Ovary (tissue), 10 donors: ENCODE measurements at regions of chr2 and their contacts with region 1.

Region 1: GRCh38 chr2:173027181-173028128 is 48.2 kb upstream of the MAP3K20 start:
- DNase-seq: peak; percentile 78 to 95 (median 85)
- H3K4me3 ChIP-seq: no peak overlapping the region
- H3K27ac ChIP-seq: peak overlapping the region in 1 of 2 donors; percentile 77
- H3K4me1 ChIP-seq: peaks cover 9% of the 10 kb centered on the region
- H3K27me3 ChIP-seq: no peaks in the 10 kb centered on the region
- CTCF ChIP-seq: peak; percentile 94 to 98 (median 96)
- EP300 ChIP-seq: no peak
- POLR2A ChIP-seq: no peak

Region 2: DNA sequence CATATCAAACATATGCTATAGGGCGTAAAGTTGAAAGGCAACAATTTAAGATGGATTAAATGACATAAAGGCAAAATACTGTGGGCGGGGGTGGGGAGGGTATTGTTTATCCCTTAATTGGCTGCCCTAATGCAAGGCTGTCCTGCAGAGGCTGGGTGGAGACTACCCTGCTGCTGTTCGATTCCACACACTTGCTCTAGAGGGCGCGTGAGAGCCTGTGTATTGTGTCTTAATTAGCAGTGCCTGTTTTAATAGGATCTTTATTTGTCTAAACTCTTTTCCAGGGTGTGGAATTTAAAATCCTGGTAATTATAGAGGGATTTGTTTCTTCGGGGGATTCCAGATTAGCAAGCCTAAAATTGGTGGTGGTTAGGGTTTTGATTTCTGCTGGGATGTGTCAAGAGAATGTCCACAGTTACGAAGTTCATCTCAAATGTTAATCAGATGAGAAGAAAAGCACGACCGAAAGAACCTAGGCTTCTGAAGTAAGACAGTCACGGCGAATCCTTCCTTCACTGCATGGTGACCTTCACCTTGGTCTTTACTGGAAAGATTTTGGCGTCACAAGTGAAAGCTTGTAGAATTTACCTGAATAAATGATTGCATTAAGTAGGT is 55.3 kb before region 1 on chr2:
- intact Hi-C with region 1: loop called in 2 of 4 experiments (anchors 10 kb)
- DNase-seq: peak in 3 of 5 donors; percentile 28 to 49 (median 35)
- H3K4me3 ChIP-seq: no peak overlapping the region
- H3K27ac ChIP-seq: no peak overlapping the region
- H3K4me1 ChIP-seq: peaks cover 16% of the 10 kb centered on the region
- H3K27me3 ChIP-seq: no peaks in the 10 kb centered on the region
- CTCF ChIP-seq: no peak
- EP300 ChIP-seq: no peak
- POLR2A ChIP-seq: no peak

Region 3: GRCh38 chr2:173090276-173090877 is 62.9 kb after region 1 on chr2:
- intact Hi-C with region 1: no loop called
- DNase-seq: peak in 2 of 5 donors; percentile 24 to 29
- H3K4me3 ChIP-seq: no peak overlapping the region
- H3K27ac ChIP-seq: peak overlapping the region; percentile 6 to 63
- H3K4me1 ChIP-seq: peaks cover 11% of the 10 kb centered on the region
- H3K27me3 ChIP-seq: no peaks in the 10 kb centered on the region
- CTCF ChIP-seq: no peak
- EP300 ChIP-seq: no peak
- POLR2A ChIP-seq: no peak

Region 4: DNA sequence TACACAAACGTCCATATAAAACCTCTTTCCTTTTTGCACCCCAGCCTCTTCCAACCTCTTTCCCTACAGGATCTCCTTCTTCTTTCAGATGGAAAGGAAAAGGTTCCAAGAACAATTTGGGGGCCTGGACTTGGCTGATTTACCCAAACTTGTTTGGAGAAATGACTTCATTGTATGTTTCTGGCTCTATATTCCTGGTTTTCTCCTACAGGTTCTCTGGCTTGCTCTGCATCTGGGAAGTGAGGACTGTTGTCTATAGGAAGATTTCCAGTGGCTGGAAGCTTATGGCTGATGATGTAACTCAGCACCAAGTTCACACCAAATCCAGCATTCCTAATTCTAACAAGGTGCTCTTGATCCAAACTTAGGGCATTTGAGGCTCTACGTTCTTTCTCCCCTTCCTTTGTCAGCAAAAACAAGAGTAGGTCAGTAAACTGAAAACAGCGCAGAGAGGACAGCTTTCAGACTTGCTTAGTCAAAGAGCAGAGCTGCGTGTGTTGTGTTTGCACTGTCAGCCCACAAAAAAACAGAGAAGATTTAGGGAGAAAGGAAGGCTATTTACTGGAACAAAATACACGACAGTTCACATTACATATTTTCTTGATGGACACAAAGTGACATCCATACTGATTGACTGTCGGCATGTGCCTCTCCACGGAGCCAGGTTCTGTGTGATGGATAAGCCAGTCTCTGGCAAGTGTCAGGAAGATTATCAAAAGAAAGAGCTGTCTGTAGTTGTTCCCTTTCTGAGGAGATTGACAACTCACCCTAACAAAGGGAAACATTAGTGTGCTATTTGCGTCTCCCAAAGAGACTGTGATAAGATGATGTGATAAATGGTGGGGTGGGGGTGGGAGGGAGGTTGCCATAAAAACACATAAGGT is 366.9 kb after region 1 on chr2:
- intact Hi-C with region 1: loop called in 1 of 4 experiments (anchors 5 kb)
- DNase-seq: no peak
- H3K4me3 ChIP-seq: no peak overlapping the region
- H3K27ac ChIP-seq: no peak overlapping the region
- H3K4me1 ChIP-seq: no peaks in the 10 kb centered on the region
- H3K27me3 ChIP-seq: no peaks in the 10 kb centered on the region
- CTCF ChIP-seq: no peak
- EP300 ChIP-seq: no peak
- POLR2A ChIP-seq: no peak